Mammary epithelial cell (primary cell): ENCODE measurements at regions of chrX and their contacts with region 1.

Region 1: GRCh38 chrX:77899081-77899828 is at the start of gene COX7B:
- DNase-seq: peak; percentile 91
- H3K4me3 ChIP-seq: peak within 1 kb of the TSS; percentile 44 to 69 (median 55)
- H3K27ac ChIP-seq: peak within 1 kb of the TSS; percentile 85
- H3K4me1 ChIP-seq: no peaks in the 10 kb centered on the region
- H3K27me3 ChIP-seq: no peaks in the 10 kb centered on the region
- CTCF ChIP-seq: peak; percentile 27 to 46
- total RNA-seq, gene COX7B: 190 to 194 TPM

Region 2: DNA sequence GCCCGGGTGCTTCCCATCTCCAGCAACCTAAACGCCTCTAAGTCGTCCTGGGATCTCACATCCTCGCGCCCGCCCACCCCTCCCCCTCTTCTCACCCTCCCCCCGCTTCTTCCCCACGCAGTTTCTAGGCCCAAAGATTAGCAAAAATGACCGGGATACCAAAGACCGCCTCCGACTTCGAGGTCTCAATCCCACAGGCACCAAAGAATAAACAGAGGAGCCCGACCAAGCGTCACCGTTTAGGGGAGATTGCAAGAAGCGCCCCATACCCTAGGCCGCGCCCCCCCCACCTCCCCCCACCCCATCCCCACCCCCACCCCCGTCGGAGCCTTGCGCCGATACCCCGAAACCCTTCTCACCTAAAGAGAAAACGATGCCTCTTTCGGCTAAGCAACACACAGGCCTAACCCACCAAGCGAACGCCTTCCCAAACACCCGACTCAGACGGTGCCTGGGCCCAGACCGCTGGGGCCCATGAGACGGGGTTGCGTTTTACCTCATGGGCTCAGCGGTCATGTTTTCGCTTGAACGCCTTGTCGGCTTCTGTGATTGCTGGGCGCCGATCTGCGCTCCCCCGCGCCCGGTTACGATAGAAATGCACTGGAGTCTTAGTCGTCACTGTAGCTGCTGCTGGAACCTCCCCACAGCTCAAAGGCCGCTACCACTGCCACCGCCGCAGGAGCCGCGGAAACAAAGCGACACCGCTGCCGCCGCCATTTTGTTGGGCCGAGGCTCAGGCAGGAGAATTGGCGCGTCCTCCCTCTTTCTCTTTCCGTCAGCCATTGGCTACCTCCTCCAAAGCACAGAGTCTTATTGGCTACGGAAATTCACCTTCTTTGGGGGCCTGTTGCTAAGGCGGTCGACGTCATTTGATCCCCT is 113.5 kb before region 1 on chrX and contains the start of gene ATRX:
- CTCF ChIA-PET with region 1: no interaction called
- dilution Hi-C with region 1: no loop called
- in situ Hi-C with region 1: no loop called
- intact Hi-C with region 1: loop called (anchors 10 kb)
- DNase-seq: peak; percentile 66
- H3K4me3 ChIP-seq: peak within 1 kb of the TSS; percentile 48 to 80 (median 67)
- H3K27ac ChIP-seq: peak within 1 kb of the TSS; percentile 85
- H3K4me1 ChIP-seq: no peaks in the 10 kb centered on the region
- H3K27me3 ChIP-seq: no peaks in the 10 kb centered on the region
- CTCF ChIP-seq: no peak
- total RNA-seq, gene ATRX: 68.3 to 68.7 TPM